GM12878 (cell line): ENCODE measurements at regions of chr13 and their contacts with region 1.

Region 1: DNA sequence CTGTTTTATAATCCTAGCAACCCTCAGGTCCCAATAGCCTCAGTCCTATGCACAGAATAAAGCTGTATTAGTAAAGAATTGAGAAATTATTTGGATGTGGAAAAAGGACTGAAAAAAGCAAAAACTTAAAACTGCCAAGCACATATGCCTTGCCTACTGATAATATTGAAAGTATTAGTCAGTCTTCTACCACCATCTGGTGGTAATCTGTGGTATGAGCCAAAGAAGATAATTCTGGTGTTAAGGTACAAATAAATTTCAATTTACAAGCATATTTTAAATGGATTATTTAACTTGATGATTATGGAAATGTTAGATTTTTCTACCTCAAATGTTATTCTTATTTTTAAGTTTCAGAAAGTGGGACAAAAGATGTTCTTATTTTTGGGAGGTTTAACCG is 460.3 kb upstream of the KLHL1 start:
- DNase-seq: peak; percentile 5
- ATAC-seq: peak; percentile 75
- H3K4me3 ChIP-seq: no peak overlapping the region
- H3K27ac ChIP-seq: no peak overlapping the region
- H3K4me1 ChIP-seq: no peaks in the 10 kb centered on the region
- H3K27me3 ChIP-seq: no peaks in the 10 kb centered on the region
- CTCF ChIP-seq: peak; percentile 54 to 71 (median 58); a peak in 4 of 6 replicates
- EP300 ChIP-seq: no peak
- POLR2A ChIP-seq: no peak
- RAD21 ChIP-seq: peak; percentile 82

Region 2: DNA sequence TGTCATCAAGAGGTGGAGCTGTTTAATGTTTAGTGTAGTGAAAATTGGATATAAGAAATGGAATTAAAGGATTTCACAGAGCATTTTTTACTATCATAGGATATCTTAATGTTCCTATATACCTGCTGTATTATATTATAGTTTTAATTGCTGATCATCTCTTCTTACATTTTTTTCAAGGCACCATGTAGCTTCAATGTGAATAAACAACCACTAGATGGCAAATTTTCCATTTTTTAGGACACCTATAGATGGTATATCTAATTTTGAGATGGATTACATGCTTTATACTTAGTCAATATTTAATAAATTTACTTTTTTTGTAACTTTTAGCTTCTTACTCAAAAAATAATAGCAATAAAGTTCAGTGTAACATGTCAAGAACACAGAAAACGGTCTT is 469.9 kb before region 1 on chr13:
- CTCF ChIA-PET with region 1: interaction called, 3 read pairs
- POLR2A ChIA-PET with region 1: no interaction called
- RAD21 ChIA-PET with region 1: no interaction called
- SMC1A ChIA-PET with region 1: no interaction called
- in situ Hi-C with region 1: no loop called
- intact Hi-C with region 1: loop called (anchors 5 kb)
- DNase-seq: no peak
- ATAC-seq: peak; percentile 47; the same call in 2 of the 3 replicates
- H3K4me3 ChIP-seq: no peak overlapping the region
- H3K27ac ChIP-seq: no peak overlapping the region
- H3K4me1 ChIP-seq: no peaks in the 10 kb centered on the region
- H3K27me3 ChIP-seq: no peaks in the 10 kb centered on the region
- CTCF ChIP-seq: peak in 2 of 3 experiments; percentile 13 to 16; a peak in 2 of 6 replicates
- EP300 ChIP-seq: no peak
- POLR2A ChIP-seq: no peak
- RAD21 ChIP-seq: 0 out of 2 replicates have a peak, but pooled peaks have one; percentile 17

Region 3: DNA sequence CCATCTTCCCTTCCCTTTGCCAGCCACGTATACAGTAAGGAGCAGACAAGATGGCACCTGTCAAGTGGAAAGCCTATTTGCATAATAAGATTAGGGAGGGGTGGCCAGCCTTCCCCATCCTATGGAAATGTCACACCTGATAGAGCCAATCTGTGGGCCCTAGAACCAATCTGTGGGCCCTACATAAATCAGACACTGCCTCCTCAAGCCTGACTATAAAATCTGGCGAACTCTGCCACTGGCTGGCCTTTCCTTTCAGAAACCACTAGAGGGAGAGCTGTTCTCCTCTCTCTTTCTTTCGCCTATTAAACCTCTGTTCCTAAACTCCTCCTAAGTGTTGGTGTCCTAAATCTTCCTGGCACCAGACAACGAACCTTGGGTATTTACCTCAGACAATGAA is 228.8 kb before region 1 on chr13:
- CTCF ChIA-PET with region 1: interaction called, 3 read pairs
- POLR2A ChIA-PET with region 1: no interaction called
- RAD21 ChIA-PET with region 1: no interaction called
- SMC1A ChIA-PET with region 1: interaction called, 5 read pairs
- in situ Hi-C with region 1: no loop called
- intact Hi-C with region 1: loop called (anchors 10 kb)
- DNase-seq: no peak
- ATAC-seq: peak; percentile 85
- H3K4me3 ChIP-seq: no peak overlapping the region
- H3K27ac ChIP-seq: no peak overlapping the region
- H3K4me1 ChIP-seq: no peaks in the 10 kb centered on the region
- H3K27me3 ChIP-seq: no peaks in the 10 kb centered on the region
- CTCF ChIP-seq: peak; percentile 32 to 60 (median 40)
- EP300 ChIP-seq: no peak
- POLR2A ChIP-seq: no peak
- RAD21 ChIP-seq: no peak